BJ (cell line): ENCODE measurements at regions of chr5 and their contacts with region 1.

Region 1: DNA sequence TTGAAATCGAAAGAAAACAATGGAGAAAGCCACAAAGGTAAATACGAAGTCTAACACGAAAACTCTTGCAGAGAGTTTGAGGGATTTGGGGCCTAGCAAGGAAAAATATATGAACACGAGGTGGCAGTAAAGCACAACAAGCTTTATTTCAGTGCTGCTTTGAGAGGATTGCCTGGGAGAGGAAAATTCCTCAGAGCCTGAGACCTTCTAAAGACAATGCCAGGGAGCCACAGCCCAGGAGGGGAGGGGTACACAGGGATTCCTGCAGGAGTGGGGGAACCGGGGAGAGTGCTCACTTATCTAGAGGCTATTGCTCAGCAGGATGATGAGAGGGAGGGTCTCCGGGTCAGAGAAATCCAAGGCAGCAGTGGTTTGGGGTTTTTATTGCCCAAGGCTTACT is 134.9 kb upstream of the ADCY2 start:
- DNase-seq: no peak
- H3K4me3 ChIP-seq: no peak overlapping the region
- H3K27me3 ChIP-seq: no peaks in the 10 kb centered on the region
- CTCF ChIP-seq: peak; percentile 65

Region 2: DNA sequence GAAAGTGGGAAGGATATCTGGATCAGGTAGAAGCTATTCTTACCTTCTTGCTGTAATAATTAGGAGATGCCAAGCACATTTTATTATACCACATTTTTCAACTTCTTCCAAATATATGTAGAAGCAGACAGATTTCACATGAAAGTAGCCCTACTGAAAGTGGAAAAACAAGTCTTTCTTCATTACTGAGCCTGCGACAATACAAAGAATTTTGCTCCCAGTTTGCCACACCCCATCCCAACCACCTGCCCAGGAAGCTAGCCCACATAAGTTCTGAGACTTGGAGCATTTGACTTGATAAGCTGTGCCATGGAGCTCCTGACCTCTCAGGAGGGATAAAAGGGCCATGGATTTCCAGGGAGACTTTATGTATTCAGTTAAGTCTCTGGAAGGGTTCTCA is 114.2 kb before region 1 on chr5:
- CTCF ChIA-PET with region 1: no interaction called
- POLR2A ChIA-PET with region 1: no interaction called
- DNase-seq: no peak
- H3K4me3 ChIP-seq: no peak overlapping the region
- H3K27me3 ChIP-seq: no peaks in the 10 kb centered on the region
- CTCF ChIP-seq: no peak

Region 3: DNA sequence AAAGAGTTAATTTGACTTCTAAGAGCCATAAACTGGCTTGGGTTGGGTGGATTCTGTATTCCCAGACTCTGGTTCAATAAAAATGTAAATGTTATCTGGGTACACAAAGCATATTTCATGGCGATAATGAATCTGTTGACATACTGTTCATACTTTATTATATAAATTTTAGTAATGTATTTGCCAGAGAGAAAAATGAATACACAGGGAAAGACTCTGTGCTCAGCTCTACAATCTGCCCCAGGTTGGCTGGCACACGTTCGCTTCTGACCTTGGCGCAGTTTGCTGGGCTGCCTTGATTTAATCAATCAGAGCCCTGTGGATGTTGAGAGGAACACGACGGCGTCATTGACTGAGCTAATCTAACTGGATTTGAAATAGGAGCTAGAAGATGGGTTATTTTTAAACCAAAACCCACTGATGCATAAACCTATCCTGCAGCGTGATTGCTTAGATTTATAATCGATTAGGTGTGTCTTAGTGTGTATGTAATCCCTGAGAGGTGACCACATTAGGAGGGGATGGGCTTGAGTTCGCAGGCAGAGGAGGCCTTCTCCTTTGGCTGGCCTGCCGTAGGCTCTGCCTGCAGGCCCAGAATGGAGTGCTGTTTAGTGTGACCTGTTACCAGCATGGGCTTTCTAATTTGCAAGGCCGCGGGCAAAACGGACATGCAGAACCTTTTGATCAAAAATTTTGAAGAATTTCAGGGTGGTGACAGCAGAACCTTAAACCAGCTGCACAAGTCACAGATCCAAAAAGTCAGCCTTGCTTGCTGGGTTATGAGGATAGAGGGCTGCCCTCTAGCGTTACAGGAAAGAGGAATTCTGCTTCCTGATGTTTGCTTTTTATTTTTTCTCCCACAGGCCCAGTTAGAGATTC is 131.0 kb after region 1 on chr5:
- CTCF ChIA-PET with region 1: interaction called, 30 read pairs
- POLR2A ChIA-PET with region 1: no interaction called
- DNase-seq: peak; percentile 3
- H3K4me3 ChIP-seq: no peak overlapping the region
- H3K27me3 ChIP-seq: peaks cover 12% of the 10 kb centered on the region
- CTCF ChIP-seq: peak; percentile 72

Region 4: GRCh38 chr5:7745882-7746610 is 485.0 kb after region 1 on chr5:
- CTCF ChIA-PET with region 1: interaction called, 20 read pairs
- POLR2A ChIA-PET with region 1: no interaction called
- DNase-seq: peak; percentile 3
- H3K4me3 ChIP-seq: no peak overlapping the region
- H3K27me3 ChIP-seq: no peaks in the 10 kb centered on the region
- CTCF ChIP-seq: peak; percentile 87